ENCODE measurements at regions of chr15 and their contacts with region 1.

Region 1: DNA sequence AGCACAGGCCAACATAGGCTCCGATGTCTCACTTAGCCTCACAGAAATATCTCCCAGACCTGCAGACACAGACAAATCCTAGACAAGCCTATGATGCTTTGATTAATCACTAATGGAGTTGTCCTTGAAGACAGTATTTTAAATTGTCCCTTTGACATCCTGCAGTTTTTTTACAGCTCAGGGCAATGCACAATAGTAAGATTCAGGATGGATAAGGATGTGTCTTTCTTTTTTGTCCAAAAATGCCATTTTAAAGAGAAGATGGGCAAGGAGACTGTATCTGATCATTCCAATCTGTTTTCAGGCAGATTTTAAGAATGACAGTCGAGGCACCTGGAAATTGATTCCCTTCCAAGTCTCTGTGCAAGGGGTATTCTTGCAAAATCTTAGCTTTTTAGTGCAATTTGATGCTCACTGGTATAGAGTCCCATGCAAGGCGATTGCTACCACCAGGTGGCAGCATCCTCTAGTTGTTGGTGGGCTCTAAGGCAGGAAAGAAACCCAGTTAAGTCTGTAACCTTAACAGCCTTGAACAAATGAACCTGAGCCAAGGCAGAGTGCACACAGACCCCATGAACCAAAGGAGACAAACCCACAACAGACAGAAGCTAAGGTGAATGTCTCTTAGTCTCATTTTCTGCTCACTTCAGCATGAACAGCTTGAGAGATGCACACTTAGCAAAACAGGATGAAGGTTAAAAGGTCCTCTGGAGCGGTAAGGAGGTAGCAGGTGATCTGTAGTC is 51.2 kb upstream of the MINAR1 start:
- DNase-seq: peak; percentile 51 to 95 (median 81)
- ATAC-seq: peak; percentile 85
- H3K4me3 ChIP-seq: no peak overlapping the region
- H3K4me1 ChIP-seq: no peaks in the 10 kb centered on the region
- CTCF ChIP-seq: peak; percentile 65

Region 2: DNA sequence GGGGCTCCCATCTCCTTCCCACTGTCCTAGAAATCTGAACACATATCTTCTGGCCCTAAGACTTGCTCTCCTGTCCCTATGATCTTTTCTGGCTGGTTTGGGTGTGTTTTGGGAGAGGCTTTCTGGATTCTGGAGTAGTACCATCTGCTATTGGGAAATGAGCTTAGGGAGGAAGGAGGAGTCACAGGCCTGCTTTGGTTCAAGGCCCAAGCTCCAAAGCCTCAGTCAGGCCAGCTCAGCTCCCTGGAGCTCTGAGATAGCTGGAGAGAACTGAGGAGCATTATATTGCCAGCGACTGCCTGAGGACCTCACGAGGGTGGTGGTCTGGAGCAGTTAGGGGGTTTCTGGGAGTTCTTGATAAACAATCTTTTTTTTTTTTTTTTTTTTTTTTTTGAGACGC is 309.0 kb before region 1 on chr15:
- intact Hi-C with region 1: no loop called
- DNase-seq: no peak
- ATAC-seq: peak; percentile 25
- H3K4me3 ChIP-seq: no peak overlapping the region
- H3K4me1 ChIP-seq: no peaks in the 10 kb centered on the region
- CTCF ChIP-seq: no peak

Region 3: GRCh38 chr15:79593119-79593867 is 212.4 kb after region 1 on chr15:
- intact Hi-C with region 1: loop called in 1 of 2 experiments (anchors 5 kb)
- DNase-seq: no peak
- ATAC-seq: no peak
- H3K4me3 ChIP-seq: no peak overlapping the region
- H3K4me1 ChIP-seq: no peaks in the 10 kb centered on the region
- CTCF ChIP-seq: no peak

Region 4: DNA sequence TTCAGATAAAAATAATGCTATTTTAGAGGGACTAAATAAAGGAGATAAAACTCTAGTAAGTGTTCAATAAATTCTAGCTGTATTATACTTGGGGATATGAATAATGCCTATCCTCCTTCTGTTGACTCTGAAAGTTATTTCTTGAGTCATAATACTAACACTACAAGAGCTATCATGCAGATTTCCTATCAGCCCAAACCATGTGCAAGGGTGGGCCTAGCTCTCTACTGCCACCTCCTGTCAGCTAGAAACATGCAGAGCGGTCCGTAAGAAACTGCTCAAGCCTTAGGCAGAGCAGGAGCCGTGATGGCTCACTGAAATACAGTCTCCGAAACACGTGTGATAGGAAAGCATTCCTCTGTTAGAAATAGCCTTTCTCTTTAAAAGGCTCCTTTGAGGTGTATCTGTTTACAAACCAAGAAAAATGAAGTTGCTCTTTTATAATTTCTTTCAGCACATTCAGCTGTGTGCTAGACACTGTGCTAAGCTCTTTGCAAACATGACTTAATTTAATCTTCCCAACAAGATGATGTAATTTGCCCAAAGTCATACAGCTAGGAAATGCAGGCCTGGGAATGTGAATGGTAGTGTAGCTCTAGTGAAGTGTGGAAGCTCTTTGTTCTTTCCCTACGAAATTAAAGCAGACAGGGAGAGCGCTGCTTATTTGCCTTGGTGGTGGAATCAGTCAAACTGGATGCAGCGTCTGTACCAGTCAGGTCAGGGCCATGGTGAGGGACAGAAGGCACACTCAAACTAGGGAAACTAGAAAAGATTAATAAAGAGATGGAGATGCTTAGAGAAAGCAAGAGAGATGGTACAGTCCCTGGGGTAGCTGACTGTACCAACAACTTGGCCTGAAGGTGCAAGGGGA is 472.8 kb after region 1 on chr15:
- intact Hi-C with region 1: loop called in 1 of 2 experiments (anchors 5 kb)
- DNase-seq: peak in 2 of 3 donors; percentile 48 to 72
- ATAC-seq: peak; percentile 98
- H3K4me3 ChIP-seq: no peak overlapping the region
- H3K4me1 ChIP-seq: no peaks in the 10 kb centered on the region
- CTCF ChIP-seq: peak; percentile 88

Measured in mucosa of descending colon (tissue), 3 donors.